ENCODE measurements at regions of chr7 and their contacts with region 1.

Region 1: GRCh38 chr7:36487756-36488336 is 98.2 kb downstream of the ANLN start:
- DNase-seq: peak in 5 of 9 experiments; percentile 9 to 77 (median 35)
- ATAC-seq: peak; percentile 89
- H3K4me3 ChIP-seq: no peak overlapping the region
- H3K4me3 Mint-ChIP-seq: no peak overlapping the region
- H3K27ac ChIP-seq: no peak overlapping the region
- H3K27ac Mint-ChIP-seq: no peak overlapping the region
- H3K4me1 ChIP-seq: no peaks in the 10 kb centered on the region
- H3K4me1 Mint-ChIP-seq: peaks cover 2% of the 10 kb centered on the region
- H3K27me3 ChIP-seq: no peaks in the 10 kb centered on the region
- H3K27me3 Mint-ChIP-seq: peaks cover 2% of the 10 kb centered on the region
- CTCF ChIP-seq: peak; percentile 87

Region 2: DNA sequence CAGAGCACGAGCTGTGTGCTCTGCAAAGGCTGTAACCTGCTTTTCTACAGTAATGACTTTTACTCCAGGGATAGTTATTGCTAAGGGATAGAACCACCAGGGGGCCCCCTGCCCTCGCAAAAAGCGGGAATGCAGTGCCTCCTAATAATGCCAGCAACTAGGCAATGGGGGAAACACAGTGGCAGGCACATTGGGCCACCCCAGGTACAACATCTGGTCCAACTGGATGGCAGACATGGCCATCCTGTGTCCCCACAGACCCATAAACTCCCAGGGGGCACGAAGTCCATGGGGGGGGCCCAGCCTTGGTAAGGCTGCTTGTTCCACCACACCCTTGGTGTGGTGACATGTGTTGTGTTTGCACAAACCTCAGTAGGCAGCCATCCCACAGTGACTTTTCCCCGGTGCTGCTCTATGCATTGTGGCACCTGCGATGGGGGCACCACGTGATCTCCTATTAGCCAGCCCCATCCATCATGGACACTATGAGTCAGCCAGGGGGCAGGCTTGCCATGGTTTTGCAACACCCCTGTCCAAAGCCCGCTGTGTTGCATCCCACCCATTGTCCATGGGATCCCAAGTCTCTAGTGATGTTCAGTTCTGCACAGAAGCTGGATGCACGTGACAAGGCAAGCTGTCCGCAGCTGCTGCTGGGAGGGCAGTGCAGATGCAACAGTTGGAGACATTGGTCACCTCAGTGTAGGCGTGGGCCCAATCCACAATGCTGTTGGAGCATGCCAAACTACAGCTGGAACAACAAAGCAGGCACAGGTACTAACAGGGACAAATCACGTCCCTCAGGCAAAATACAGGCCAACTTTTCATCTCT is 14.2 kb before region 1 on chr7:
- CTCF ChIA-PET with region 1: interaction called, 11 read pairs
- POLR2A ChIA-PET with region 1: no interaction called
- intact Hi-C with region 1: no loop called
- DNase-seq: peak in 4 of 9 experiments; percentile 13 to 25 (median 18)
- ATAC-seq: no peak
- H3K4me3 ChIP-seq: no peak overlapping the region
- H3K4me3 Mint-ChIP-seq: no peak overlapping the region
- H3K27ac ChIP-seq: no peak overlapping the region
- H3K27ac Mint-ChIP-seq: no peak overlapping the region
- H3K4me1 ChIP-seq: no peaks in the 10 kb centered on the region
- H3K4me1 Mint-ChIP-seq: peaks cover 9% of the 10 kb centered on the region
- H3K27me3 ChIP-seq: no peaks in the 10 kb centered on the region
- H3K27me3 Mint-ChIP-seq: no peaks in the 10 kb centered on the region
- CTCF ChIP-seq: no peak

Region 3: GRCh38 chr7:36639826-36640225 is 152.0 kb after region 1 on chr7:
- CTCF ChIA-PET with region 1: interaction called, 10 read pairs
- POLR2A ChIA-PET with region 1: no interaction called
- intact Hi-C with region 1: no loop called
- DNase-seq: peak; percentile 21 to 86 (median 62)
- ATAC-seq: peak; percentile 87
- H3K4me3 ChIP-seq: peak overlapping the region in 1 of 2 experiments; percentile 7
- H3K4me3 Mint-ChIP-seq: peak overlapping the region; percentile 60
- H3K27ac ChIP-seq: peak overlapping the region; percentile 65 to 80
- H3K27ac Mint-ChIP-seq: peak overlapping the region; percentile 95
- H3K4me1 ChIP-seq: peaks cover 75% of the 10 kb centered on the region
- H3K4me1 Mint-ChIP-seq: peaks cover 95% of the 10 kb centered on the region
- H3K27me3 ChIP-seq: no peaks in the 10 kb centered on the region
- H3K27me3 Mint-ChIP-seq: no peaks in the 10 kb centered on the region
- CTCF ChIP-seq: no peak

Region 4: GRCh38 chr7:36677769-36678437 is 190.1 kb after region 1 on chr7:
- CTCF ChIA-PET with region 1: interaction called, 12 read pairs
- POLR2A ChIA-PET with region 1: interaction called, 4 read pairs
- intact Hi-C with region 1: no loop called
- DNase-seq: peak in 3 of 9 experiments; percentile 31 to 64 (median 32)
- ATAC-seq: peak; percentile 59
- H3K4me3 ChIP-seq: peak overlapping the region in 1 of 2 experiments; percentile 24
- H3K4me3 Mint-ChIP-seq: peak overlapping the region; percentile 70
- H3K27ac ChIP-seq: peak overlapping the region; percentile 15 to 75
- H3K27ac Mint-ChIP-seq: peak overlapping the region; percentile 91
- H3K4me1 ChIP-seq: peaks cover 32% of the 10 kb centered on the region
- H3K4me1 Mint-ChIP-seq: peaks cover 63% of the 10 kb centered on the region
- H3K27me3 ChIP-seq: no peaks in the 10 kb centered on the region
- H3K27me3 Mint-ChIP-seq: no peaks in the 10 kb centered on the region
- CTCF ChIP-seq: no peak

Region 5: DNA sequence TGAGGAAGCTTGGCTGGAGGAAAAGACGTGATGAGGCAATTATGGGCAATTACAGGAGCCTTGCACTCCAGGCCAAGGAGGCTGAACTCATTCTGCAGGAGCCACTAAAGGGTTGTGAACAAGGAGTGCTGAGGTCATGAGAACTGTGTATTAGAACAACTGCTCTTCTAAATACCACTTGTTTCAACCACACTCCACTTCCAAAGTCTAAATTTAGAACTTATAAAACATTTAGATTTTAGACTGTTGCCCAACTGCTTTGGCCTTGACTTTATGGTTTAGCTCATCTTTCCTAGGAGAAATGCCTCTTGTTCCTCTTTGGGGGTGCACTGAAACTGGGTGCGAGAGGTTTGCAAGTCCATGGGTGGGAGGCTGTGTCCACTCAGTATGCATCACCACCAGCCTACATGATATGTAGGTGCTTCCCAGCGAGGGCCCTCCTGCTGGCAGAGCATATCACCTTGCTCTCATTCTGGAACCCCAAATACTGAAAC is 436.1 kb after region 1 on chr7:
- CTCF ChIA-PET with region 1: no interaction called
- POLR2A ChIA-PET with region 1: no interaction called
- intact Hi-C with region 1: no loop called
- DNase-seq: no peak
- ATAC-seq: no peak
- H3K4me3 ChIP-seq: no peak overlapping the region
- H3K4me3 Mint-ChIP-seq: no peak overlapping the region
- H3K27ac ChIP-seq: no peak overlapping the region
- H3K27ac Mint-ChIP-seq: no peak overlapping the region
- H3K4me1 ChIP-seq: no peaks in the 10 kb centered on the region
- H3K4me1 Mint-ChIP-seq: peaks cover 7% of the 10 kb centered on the region
- H3K27me3 ChIP-seq: no peaks in the 10 kb centered on the region
- H3K27me3 Mint-ChIP-seq: no peaks in the 10 kb centered on the region
- CTCF ChIP-seq: no peak

Region 6: GRCh38 chr7:37181550-37181932 is 693.7 kb after region 1 on chr7:
- CTCF ChIA-PET with region 1: interaction called, 95 read pairs
- POLR2A ChIA-PET with region 1: interaction called, 3 read pairs
- intact Hi-C with region 1: loop called (anchors 1 kb)
- DNase-seq: no peak
- ATAC-seq: no peak
- H3K4me3 ChIP-seq: no peak overlapping the region
- H3K4me3 Mint-ChIP-seq: no peak overlapping the region
- H3K27ac ChIP-seq: no peak overlapping the region
- H3K27ac Mint-ChIP-seq: no peak overlapping the region
- H3K4me1 ChIP-seq: no peaks in the 10 kb centered on the region
- H3K4me1 Mint-ChIP-seq: no peaks in the 10 kb centered on the region
- H3K27me3 ChIP-seq: no peaks in the 10 kb centered on the region
- H3K27me3 Mint-ChIP-seq: no peaks in the 10 kb centered on the region
- CTCF ChIP-seq: no peak

Region 7: DNA sequence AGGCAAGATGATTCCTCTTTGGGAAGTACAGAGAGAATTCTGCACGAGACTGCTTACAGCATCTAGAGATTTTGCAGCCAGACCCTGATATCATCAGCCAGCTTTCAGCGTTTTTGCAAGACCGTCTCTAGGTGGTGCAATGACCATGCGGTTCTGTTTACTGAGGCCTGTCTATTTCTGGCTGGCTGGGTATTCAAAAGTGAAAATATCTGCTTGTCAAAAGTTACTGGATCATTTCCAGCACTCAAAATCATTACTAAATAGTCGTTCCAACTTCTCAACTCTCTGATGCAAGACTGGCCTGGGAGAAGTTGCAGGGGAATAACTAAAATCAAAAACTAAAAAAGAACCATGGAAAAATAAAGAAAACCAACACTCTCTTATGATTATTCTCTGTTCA is 720.7 kb after region 1 on chr7:
- CTCF ChIA-PET with region 1: interaction called, 11 read pairs
- POLR2A ChIA-PET with region 1: no interaction called
- intact Hi-C with region 1: no loop called
- DNase-seq: peak in 5 of 9 experiments; percentile 31 to 56 (median 44)
- ATAC-seq: peak; percentile 54
- H3K4me3 ChIP-seq: no peak overlapping the region
- H3K4me3 Mint-ChIP-seq: no peak overlapping the region
- H3K27ac ChIP-seq: no peak overlapping the region
- H3K27ac Mint-ChIP-seq: peak overlapping the region; percentile 8
- H3K4me1 ChIP-seq: no peaks in the 10 kb centered on the region
- H3K4me1 Mint-ChIP-seq: no peaks in the 10 kb centered on the region
- H3K27me3 ChIP-seq: no peaks in the 10 kb centered on the region
- H3K27me3 Mint-ChIP-seq: no peaks in the 10 kb centered on the region
- CTCF ChIP-seq: no peak

Region 8: GRCh38 chr7:37504801-37505200 is 1017.0 kb after region 1 on chr7:
- CTCF ChIA-PET with region 1: no interaction called
- POLR2A ChIA-PET with region 1: no interaction called
- intact Hi-C with region 1: loop called in 1 of 2 experiments (anchors 10 kb)
- DNase-seq: no peak
- ATAC-seq: no peak
- H3K4me3 ChIP-seq: no peak overlapping the region
- H3K4me3 Mint-ChIP-seq: no peak overlapping the region
- H3K27ac ChIP-seq: no peak overlapping the region
- H3K27ac Mint-ChIP-seq: no peak overlapping the region
- H3K4me1 ChIP-seq: no peaks in the 10 kb centered on the region
- H3K4me1 Mint-ChIP-seq: no peaks in the 10 kb centered on the region
- H3K27me3 ChIP-seq: no peaks in the 10 kb centered on the region
- H3K27me3 Mint-ChIP-seq: peaks cover 11% of the 10 kb centered on the region
- CTCF ChIP-seq: no peak

Measured in CD8-positive, alpha-beta T cell (primary cell).